BJ (cell line): ENCODE measurements at regions of chr19 and their contacts with region 1.

Region 1: GRCh38 chr19:55160128-55160985 is 2.8 kb upstream of the TNNI3 start:
- DNase-seq: no peak
- H3K4me3 ChIP-seq: no peak overlapping the region
- H3K27me3 ChIP-seq: peaks cover 7% of the 10 kb centered on the region; the same call in 1 of the 2 replicates
- CTCF ChIP-seq: peak; percentile 98

Region 2: DNA sequence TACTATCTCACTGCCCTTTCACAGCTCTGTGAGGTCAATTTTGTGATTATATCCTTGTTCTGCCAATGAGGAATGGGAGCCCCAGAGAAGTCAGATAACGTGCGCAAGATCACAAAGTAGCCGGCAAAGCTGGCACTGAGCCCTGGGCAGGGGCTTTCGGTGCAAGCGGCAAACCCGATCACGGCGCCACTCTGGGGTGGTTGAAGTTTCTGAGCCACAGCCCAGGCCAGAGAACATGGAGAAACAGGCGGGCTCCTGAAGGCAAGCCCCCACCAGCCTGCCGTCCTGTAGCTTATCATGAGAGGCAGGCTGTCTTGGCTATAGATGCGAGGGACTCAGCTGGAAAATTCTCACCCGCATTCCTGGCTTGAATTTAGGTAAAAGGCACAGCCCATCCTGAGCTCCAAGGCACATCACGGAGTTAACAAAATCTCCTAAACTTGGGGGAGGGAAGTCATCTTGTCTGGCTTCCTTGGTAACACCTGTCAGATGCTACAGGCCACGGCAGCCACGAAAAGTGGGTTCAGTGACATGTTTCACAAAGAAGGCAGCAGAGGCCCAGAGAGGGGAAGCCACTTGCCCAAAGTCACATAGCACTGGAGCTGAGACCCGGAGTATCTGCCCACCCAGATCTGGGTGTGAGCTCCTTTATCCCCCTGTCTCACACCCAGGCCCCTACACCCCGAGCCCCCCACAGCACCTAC is 23.8 kb before region 1 on chr19:
- CTCF ChIA-PET with region 1: interaction called, 43 read pairs
- POLR2A ChIA-PET with region 1: no interaction called
- DNase-seq: no peak
- H3K4me3 ChIP-seq: no peak overlapping the region
- H3K27me3 ChIP-seq: peaks cover 2% of the 10 kb centered on the region; the same call in 1 of the 2 replicates
- CTCF ChIP-seq: no peak

Region 3: GRCh38 chr19:55173714-55174409 is 13.5 kb after region 1 on chr19:
- CTCF ChIA-PET with region 1: interaction called, 10 read pairs
- POLR2A ChIA-PET with region 1: no interaction called
- DNase-seq: peak; percentile 47
- H3K4me3 ChIP-seq: peak overlapping the region; percentile 66
- H3K27me3 ChIP-seq: 0 out of 2 replicates have a peak, but pooled peaks cover 2% of the 10 kb centered on the region
- CTCF ChIP-seq: peak; percentile 23; the same call in 1 of the 2 replicates

Region 4: GRCh38 chr19:55189424-55189823 is 29.1 kb after region 1 on chr19:
- CTCF ChIA-PET with region 1: no interaction called
- POLR2A ChIA-PET with region 1: no interaction called
- DNase-seq: peak; percentile 83
- H3K4me3 ChIP-seq: no peak overlapping the region
- H3K27me3 ChIP-seq: no peaks in the 10 kb centered on the region; the same call in 1 of the 2 replicates
- CTCF ChIP-seq: no peak

Region 5: GRCh38 chr19:55289117-55289796 is 128.9 kb after region 1 on chr19:
- CTCF ChIA-PET with region 1: no interaction called
- POLR2A ChIA-PET with region 1: no interaction called
- DNase-seq: no peak
- H3K4me3 ChIP-seq: no peak overlapping the region
- H3K27me3 ChIP-seq: no peaks in the 10 kb centered on the region
- CTCF ChIP-seq: no peak